ENCODE measurements at regions of chr19 and their contacts with region 1.

Region 1: DNA sequence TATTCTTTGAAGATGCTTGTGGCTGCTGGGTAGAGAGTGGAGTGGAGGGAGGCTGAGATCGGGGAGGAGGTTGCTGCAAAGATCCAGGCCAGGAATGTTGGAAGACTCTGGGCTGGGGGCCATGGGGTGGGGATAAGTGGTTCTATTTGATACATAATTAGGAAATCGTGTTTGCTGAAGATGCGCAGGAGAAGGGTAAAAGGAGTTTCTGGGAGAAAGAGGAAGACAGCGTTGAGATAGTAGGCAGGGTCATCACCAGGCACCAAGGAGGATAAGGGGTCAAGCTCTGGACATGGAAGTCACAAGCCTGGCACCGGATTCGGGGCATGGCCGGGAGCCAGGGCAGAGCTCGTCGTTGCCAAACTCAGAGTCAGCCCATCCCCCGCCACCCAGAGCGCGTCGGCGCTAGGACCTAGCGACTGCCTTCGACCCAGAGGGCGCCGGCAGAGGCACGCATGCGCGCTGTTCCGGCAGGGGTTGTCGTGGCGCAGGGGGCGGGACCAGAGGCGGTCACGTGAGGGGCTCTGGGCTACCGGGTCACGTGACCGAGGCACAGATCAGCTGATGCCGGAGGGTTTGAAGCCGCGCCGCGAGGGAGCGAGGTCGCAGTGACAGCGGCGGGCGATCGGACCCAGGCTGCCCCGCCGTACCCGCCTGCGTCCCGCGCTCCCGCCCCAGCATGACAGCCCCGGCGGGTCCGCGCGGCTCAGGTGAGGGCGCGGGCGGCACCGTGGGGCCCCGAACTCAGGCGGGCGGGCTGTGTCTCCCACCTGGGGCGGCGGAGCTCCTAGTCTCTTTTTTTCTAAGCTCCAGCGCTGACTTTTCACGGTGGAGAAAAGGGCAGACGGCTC is at the start of gene MCOLN1:
- DNase-seq: peak; percentile 99
- ATAC-seq: peak; percentile 96
- H3K4me3 ChIP-seq: peak within 1 kb of the TSS; percentile 48 to 75 (median 67)
- H3K4me3 Mint-ChIP-seq: peak within 1 kb of the TSS; percentile 91
- H3K27ac ChIP-seq: peak within 1 kb of the TSS in 1 of 2 donors; percentile 55
- H3K27ac Mint-ChIP-seq: peak within 1 kb of the TSS; percentile 94
- H3K4me1 ChIP-seq: peaks cover 13 to 19% of the 10 kb centered on the region in 2 donors
- H3K4me1 Mint-ChIP-seq: peaks cover 12% of the 10 kb centered on the region
- H3K27me3 ChIP-seq: no peaks in the 10 kb centered on the region
- H3K27me3 Mint-ChIP-seq: no peaks in the 10 kb centered on the region
- CTCF ChIP-seq: no peak
- total RNA-seq, gene MCOLN1: 12.5 TPM in 2 replicates

Region 2: DNA sequence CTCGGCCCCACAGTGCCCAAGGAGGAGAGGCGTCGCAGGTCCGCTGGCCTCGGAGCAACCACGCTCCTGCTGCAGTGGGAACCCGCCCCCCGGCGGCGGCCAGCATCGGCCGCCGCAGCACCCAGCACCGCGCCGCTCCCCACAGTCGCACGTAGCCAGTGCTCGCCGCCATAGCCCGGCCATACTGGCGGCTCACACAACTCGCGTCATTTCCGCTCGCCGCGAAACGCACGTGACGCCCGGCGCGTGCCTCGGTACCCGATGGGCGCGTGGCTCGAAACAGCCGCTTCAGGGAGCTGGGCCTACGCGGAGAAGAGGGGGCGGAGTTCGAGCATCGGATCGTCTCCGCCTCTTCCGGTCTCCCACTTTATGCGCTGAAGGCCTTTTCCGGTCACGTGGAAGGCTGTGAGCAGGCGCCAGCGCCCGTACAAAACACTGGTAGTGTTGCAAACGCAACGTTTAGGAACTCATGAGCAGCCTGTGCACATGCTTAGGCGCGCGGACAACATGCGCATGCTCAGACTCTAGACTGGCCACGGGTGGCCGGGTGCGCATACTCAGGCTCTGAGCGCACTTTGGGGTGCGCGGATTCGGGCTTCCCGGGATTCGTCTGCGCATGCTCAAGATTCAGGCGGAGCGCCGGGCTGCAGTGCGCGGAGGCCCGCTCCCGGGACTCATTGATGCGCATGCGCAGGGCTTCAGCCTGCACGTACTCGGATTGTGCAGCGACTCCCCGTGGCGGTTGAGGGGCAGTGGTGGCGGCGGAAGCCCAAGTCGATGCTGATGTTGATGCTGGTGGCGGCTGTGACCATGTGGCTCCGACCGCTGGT is 1802.1 kb before region 1 on chr19 and contains the starts of genes CATSPERD and LONP1:
- CTCF ChIA-PET with region 1: no interaction called
- POLR2A ChIA-PET with region 1: no interaction called
- intact Hi-C with region 1: loop called (anchors 5 kb)
- DNase-seq: peak; percentile 100
- ATAC-seq: peak; percentile 86
- H3K4me3 ChIP-seq: peak within 1 kb of the TSS; percentile 73 to 95 (median 91)
- H3K4me3 Mint-ChIP-seq: peak within 1 kb of the TSS; percentile 95
- H3K27ac ChIP-seq: peak within 1 kb of the TSS; percentile 87 to 98
- H3K27ac Mint-ChIP-seq: peak within 1 kb of the TSS; percentile 99
- H3K4me1 ChIP-seq: peaks cover 12 to 26% of the 10 kb centered on the region in 2 donors
- H3K4me1 Mint-ChIP-seq: peaks cover 27% of the 10 kb centered on the region
- H3K27me3 ChIP-seq: no peaks in the 10 kb centered on the region
- H3K27me3 Mint-ChIP-seq: peaks cover 3% of the 10 kb centered on the region
- CTCF ChIP-seq: peak; percentile 86
- total RNA-seq, gene CATSPERD: not detected in 2 replicates
- total RNA-seq, gene LONP1: 67.2 and 70.3 TPM in 2 replicates

Region 3: GRCh38 chr19:7488736-7489353 is 33.5 kb before region 1 on chr19 and contains the start of gene PEX11G:
- CTCF ChIA-PET with region 1: no interaction called
- POLR2A ChIA-PET with region 1: no interaction called
- intact Hi-C with region 1: loop called (anchors 1 kb)
- DNase-seq: peak; percentile 93
- ATAC-seq: peak; percentile 99
- H3K4me3 ChIP-seq: peak within 1 kb of the TSS; percentile 43 to 67 (median 61)
- H3K4me3 Mint-ChIP-seq: peak within 1 kb of the TSS; percentile 90
- H3K27ac ChIP-seq: peak within 1 kb of the TSS in 1 of 2 donors; percentile 67
- H3K27ac Mint-ChIP-seq: peak within 1 kb of the TSS; percentile 81
- H3K4me1 ChIP-seq: peaks cover 5 to 14% of the 10 kb centered on the region in 2 donors
- H3K4me1 Mint-ChIP-seq: peaks cover 7% of the 10 kb centered on the region
- H3K27me3 ChIP-seq: peaks cover 0 to 3% (median 0%) of the 10 kb centered on the region in 4 experiments
- H3K27me3 Mint-ChIP-seq: no peaks in the 10 kb centered on the region
- CTCF ChIP-seq: no peak
- total RNA-seq, gene PEX11G: 0.62 and 0.68 TPM in 2 replicates

Region 4: GRCh38 chr19:7629347-7630054 is 107.2 kb after region 1 on chr19 and contains the starts of genes PET100 and XAB2:
- CTCF ChIA-PET with region 1: no interaction called
- POLR2A ChIA-PET with region 1: interaction called, 3 read pairs
- intact Hi-C with region 1: loop called (anchors 2 kb)
- DNase-seq: peak; percentile 99
- ATAC-seq: peak; percentile 96
- H3K4me3 ChIP-seq: peak within 1 kb of the TSS; percentile 78 to 100 (median 99)
- H3K4me3 Mint-ChIP-seq: peak within 1 kb of the TSS; percentile 92
- H3K27ac ChIP-seq: peak within 1 kb of the TSS; percentile 87 to 91
- H3K27ac Mint-ChIP-seq: peak within 1 kb of the TSS; percentile 95
- H3K4me1 ChIP-seq: peaks cover 19 to 31% of the 10 kb centered on the region in 2 donors
- H3K4me1 Mint-ChIP-seq: peaks cover 43% of the 10 kb centered on the region
- H3K27me3 ChIP-seq: no peaks in the 10 kb centered on the region
- H3K27me3 Mint-ChIP-seq: no peaks in the 10 kb centered on the region
- CTCF ChIP-seq: no peak
- total RNA-seq, gene PET100: 89.1 and 100 TPM in 2 replicates
- total RNA-seq, gene XAB2: 62.7 and 64.2 TPM in 2 replicates